Left colon (tissue), 2 donors: ENCODE measurements at regions of chr1 and their contacts with region 1.

Region 1: DNA sequence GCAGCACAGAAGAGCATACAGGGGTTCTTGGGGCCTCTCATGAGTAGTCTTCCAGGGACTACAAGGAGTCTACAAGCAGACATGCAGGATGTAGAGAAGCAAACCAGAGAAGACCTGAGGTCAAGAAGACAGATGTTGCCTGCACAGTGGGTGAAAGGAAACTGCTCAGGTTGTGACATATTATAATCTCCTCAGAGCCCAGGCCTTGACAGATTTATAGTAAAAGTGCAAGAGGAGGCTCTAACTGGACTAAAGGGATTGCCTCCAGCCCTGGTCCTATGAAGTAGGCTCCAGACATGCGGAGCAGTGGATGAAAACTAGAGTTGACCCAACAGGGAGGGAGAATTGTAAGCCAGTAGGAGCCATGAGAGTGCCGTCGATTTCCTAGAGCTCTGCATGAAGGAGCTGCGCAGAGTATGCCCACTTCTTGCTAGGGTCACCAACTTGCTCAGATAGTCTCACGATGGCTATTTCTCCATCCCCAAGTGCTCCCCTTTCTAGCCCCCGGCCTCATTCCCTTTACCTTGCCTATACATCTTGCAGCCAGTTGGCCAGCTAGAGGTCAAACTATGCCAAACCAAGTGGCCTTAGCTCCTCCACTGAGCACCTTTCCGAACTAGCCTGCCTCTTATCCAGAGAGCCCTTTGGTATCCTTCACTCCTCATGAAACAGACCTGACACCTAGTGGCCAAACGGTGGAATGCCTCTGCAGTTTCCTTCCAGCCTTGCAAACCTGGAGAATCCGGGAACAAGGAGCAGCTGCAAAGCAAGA is 36.2 kb upstream of the IPO9 start:
- DNase-seq: peak; percentile 54 to 71
- ATAC-seq: peak; percentile 97

Region 2: DNA sequence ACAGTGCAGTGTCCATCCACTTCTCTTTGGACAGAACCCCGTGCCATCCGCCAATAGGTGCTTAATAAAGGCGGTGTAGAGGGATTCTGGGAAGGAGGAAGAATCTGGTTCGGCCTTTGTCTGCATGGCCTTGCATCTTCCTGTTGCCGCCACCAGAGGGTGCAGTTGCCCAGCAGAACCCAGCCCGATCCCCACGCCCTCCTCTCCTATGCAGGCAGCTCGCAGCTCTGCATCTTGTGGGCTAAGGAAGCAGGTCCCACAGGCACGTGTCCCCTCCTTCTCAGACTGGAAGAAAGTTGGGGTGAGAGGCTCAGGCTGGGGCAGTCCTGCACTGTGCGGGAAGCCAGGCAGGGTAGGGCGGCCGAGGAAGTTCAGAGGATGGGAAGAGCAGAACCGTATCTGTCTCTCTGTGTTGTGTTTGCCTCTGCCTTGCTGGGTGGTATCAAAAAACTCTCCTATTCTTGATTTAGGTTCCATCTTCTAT is 233.0 kb before region 1 on chr1:
- intact Hi-C with region 1: loop called (anchors 10 kb)
- DNase-seq: peak; percentile 71 to 80
- ATAC-seq: peak; percentile 98

Region 3: DNA sequence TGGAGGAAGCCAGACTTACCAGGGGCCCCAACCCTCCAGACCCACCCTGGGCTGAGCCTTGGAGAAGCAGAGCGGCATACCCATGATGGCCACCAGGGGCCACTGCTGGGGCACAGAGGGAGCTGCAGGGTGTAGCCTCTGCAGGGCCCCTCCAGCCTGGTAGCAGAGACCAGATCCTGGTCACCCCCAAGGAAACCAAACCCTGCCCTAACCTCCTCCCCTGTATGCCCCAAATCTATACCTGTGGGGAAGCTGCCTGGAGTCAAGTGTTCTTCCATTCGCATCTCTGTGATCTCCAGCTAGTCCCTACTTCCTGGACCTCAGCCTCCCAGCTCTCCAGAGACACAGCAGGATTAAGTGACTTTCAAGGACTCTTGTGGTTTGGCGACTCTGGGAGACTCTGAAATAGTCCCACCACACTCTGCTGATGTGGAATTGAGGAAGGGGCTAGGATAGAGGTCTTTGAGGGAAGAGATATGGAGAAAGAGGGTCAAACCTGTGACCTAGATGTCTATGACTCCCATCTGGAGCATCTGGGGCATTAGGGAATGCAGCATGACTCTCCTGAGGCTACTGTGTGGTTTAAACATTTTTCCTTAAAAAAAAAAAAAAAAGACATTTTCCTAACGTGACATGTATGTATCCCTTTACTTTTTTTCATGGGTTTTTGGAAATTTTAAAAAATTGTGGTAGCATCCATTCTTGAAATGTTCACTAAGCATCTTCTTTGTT is 83.0 kb before region 1 on chr1:
- intact Hi-C with region 1: loop called (anchors 2 to 5 kb)
- DNase-seq: peak in 1 of 2 donors; percentile 77
- ATAC-seq: peak; percentile 67